Pancreas (tissue), 10 donors: ENCODE measurements at regions of chr6 and their contacts with region 1.

Region 1: GRCh38 chr6:71717035-71717434 is 169.3 kb upstream of the RIMS1 start:
- DNase-seq: no peak
- ATAC-seq: no peak
- H3K4me3 ChIP-seq: no peak overlapping the region
- H3K27ac ChIP-seq: no peak overlapping the region
- H3K4me1 ChIP-seq: no peaks in the 10 kb centered on the region
- H3K27me3 ChIP-seq: no peaks in the 10 kb centered on the region
- CTCF ChIP-seq: no peak

Region 2: GRCh38 chr6:71248306-71248765 is 468.7 kb before region 1 on chr6:
- intact Hi-C with region 1: no loop called
- DNase-seq: no peak
- ATAC-seq: peak in 2 of 4 donors; percentile 70 to 76
- H3K4me3 ChIP-seq: no peak overlapping the region
- H3K27ac ChIP-seq: no peak overlapping the region
- H3K4me1 ChIP-seq: no peaks in the 10 kb centered on the region
- H3K27me3 ChIP-seq: no peaks in the 10 kb centered on the region
- CTCF ChIP-seq: no peak

Region 3: GRCh38 chr6:71706523-71706922 is 10.5 kb before region 1 on chr6:
- intact Hi-C with region 1: loop called in 1 of 3 experiments (anchors 1 kb)
- DNase-seq: no peak
- ATAC-seq: no peak
- H3K4me3 ChIP-seq: no peak overlapping the region
- H3K27ac ChIP-seq: no peak overlapping the region
- H3K4me1 ChIP-seq: no peaks in the 10 kb centered on the region
- H3K27me3 ChIP-seq: no peaks in the 10 kb centered on the region
- CTCF ChIP-seq: no peak

Region 4: DNA sequence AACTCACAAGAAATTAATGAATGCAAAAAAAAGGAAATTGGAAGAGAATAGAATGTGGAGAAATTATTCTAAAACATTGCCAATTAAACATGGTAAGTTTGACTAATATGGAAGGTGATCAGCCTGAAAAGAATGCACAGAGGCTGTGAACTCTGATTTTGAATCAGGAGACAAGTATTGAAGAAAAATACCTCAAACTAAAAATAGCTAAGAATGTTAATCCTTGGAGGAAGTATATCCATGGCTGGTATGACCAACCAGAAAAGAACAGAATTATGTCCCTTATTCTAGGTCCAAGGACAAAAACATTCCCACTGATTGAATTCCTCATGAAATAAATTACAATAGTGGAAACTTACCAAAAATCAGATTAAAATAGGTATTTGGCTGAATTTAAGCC is 162.0 kb after region 1 on chr6:
- intact Hi-C with region 1: no loop called
- DNase-seq: no peak
- ATAC-seq: no peak
- H3K4me3 ChIP-seq: no peak overlapping the region
- H3K27ac ChIP-seq: no peak overlapping the region
- H3K4me1 ChIP-seq: no peaks in the 10 kb centered on the region
- H3K27me3 ChIP-seq: no peaks in the 10 kb centered on the region
- CTCF ChIP-seq: no peak